Activated CD8-positive, alpha-beta T cell treated with anti-CD3 and anti-CD28 coated beads for 36 hours (primary cell): ENCODE measurements at regions of chr1 and their contacts with region 1.

Region 1: GRCh38 chr1:205977402-205978014 is 25.7 kb downstream of the RAB7B start:
- DNase-seq: peak; percentile 74
- ATAC-seq: peak; percentile 88
- H3K4me3 Mint-ChIP-seq: no peak overlapping the region
- H3K27ac Mint-ChIP-seq: no peak overlapping the region
- H3K4me1 Mint-ChIP-seq: no peaks in the 10 kb centered on the region
- H3K27me3 Mint-ChIP-seq: peaks cover 1% of the 10 kb centered on the region
- CTCF ChIP-seq: peak; percentile 87

Region 2: GRCh38 chr1:205449750-205450443 is 527.6 kb before region 1 on chr1:
- CTCF ChIA-PET with region 1: no interaction called
- POLR2A ChIA-PET with region 1: no interaction called
- intact Hi-C with region 1: no loop called
- DNase-seq: peak; percentile 62
- ATAC-seq: peak; percentile 93
- H3K4me3 Mint-ChIP-seq: peak overlapping the region; percentile 32
- H3K27ac Mint-ChIP-seq: peak overlapping the region; percentile 77
- H3K4me1 Mint-ChIP-seq: peaks cover 5% of the 10 kb centered on the region
- H3K27me3 Mint-ChIP-seq: peaks cover 28% of the 10 kb centered on the region
- CTCF ChIP-seq: no peak

Region 3: DNA sequence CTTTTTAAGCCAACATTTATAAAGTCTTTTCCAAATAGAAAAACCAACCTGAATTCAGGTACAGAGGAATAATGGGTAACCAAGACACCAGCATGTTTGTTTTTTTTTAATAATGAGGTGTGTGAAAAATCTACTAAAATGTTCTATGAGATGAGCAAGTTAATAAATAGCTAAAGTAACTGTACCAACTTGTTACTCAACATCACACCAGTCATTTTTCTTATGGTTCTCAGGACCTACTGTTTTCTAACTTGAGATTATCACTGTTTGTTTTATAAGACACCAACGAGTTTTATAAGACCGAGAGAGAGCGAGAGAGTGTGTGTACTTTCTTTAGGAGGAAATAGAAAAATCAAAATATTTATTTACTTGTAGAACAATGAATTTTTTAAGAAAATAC is 358.1 kb before region 1 on chr1:
- CTCF ChIA-PET with region 1: no interaction called
- POLR2A ChIA-PET with region 1: no interaction called
- intact Hi-C with region 1: no loop called
- DNase-seq: no peak
- ATAC-seq: no peak
- H3K4me3 Mint-ChIP-seq: no peak overlapping the region
- H3K27ac Mint-ChIP-seq: no peak overlapping the region
- H3K4me1 Mint-ChIP-seq: peaks cover 29% of the 10 kb centered on the region
- H3K27me3 Mint-ChIP-seq: no peaks in the 10 kb centered on the region
- CTCF ChIP-seq: no peak

Region 4: DNA sequence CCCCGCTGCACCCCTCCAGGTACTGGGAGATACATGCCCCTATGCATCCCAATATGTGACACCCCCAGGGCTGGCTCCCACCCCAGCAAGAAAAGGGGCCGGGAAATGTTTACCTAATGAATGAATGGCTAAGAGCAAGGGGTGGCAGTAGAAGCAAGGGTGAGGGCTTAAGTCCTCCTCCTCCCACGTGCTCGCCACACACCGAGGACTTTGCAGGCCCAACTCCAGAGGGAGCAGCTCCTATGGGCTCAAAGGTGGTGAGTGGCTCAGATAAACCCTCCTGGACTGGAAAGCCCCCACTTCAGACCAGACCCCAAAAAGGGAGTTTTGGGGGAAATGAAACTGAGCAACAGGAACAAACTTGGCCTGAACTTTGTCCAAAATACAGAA is 308.6 kb before region 1 on chr1:
- CTCF ChIA-PET with region 1: interaction called, 10 read pairs
- POLR2A ChIA-PET with region 1: no interaction called
- intact Hi-C with region 1: no loop called
- DNase-seq: no peak
- ATAC-seq: peak; percentile 31
- H3K4me3 Mint-ChIP-seq: no peak overlapping the region
- H3K27ac Mint-ChIP-seq: no peak overlapping the region
- H3K4me1 Mint-ChIP-seq: peaks cover 7% of the 10 kb centered on the region
- H3K27me3 Mint-ChIP-seq: peaks cover 9% of the 10 kb centered on the region
- CTCF ChIP-seq: no peak

Region 5: GRCh38 chr1:205791568-205792180 is 185.8 kb before region 1 on chr1:
- CTCF ChIA-PET with region 1: interaction called, 145 read pairs
- POLR2A ChIA-PET with region 1: interaction called, 6 read pairs
- intact Hi-C with region 1: loop called (anchors 2 kb)
- DNase-seq: peak; percentile 77
- ATAC-seq: peak; percentile 95
- H3K4me3 Mint-ChIP-seq: no peak overlapping the region
- H3K27ac Mint-ChIP-seq: no peak overlapping the region
- H3K4me1 Mint-ChIP-seq: no peaks in the 10 kb centered on the region
- H3K27me3 Mint-ChIP-seq: no peaks in the 10 kb centered on the region
- CTCF ChIP-seq: peak; percentile 87

Region 6: GRCh38 chr1:205858141-205858961 is 119.2 kb before region 1 on chr1:
- CTCF ChIA-PET with region 1: interaction called, 10 read pairs
- POLR2A ChIA-PET with region 1: no interaction called
- intact Hi-C with region 1: no loop called
- DNase-seq: no peak
- ATAC-seq: no peak
- H3K4me3 Mint-ChIP-seq: no peak overlapping the region
- H3K27ac Mint-ChIP-seq: no peak overlapping the region
- H3K4me1 Mint-ChIP-seq: peaks cover 4% of the 10 kb centered on the region
- H3K27me3 Mint-ChIP-seq: no peaks in the 10 kb centered on the region
- CTCF ChIP-seq: no peak

Region 7: GRCh38 chr1:205870236-205870635 is 107.3 kb before region 1 on chr1:
- CTCF ChIA-PET with region 1: no interaction called
- POLR2A ChIA-PET with region 1: no interaction called
- intact Hi-C with region 1: no loop called
- DNase-seq: no peak
- ATAC-seq: no peak
- H3K4me3 Mint-ChIP-seq: no peak overlapping the region
- H3K27ac Mint-ChIP-seq: no peak overlapping the region
- H3K4me1 Mint-ChIP-seq: no peaks in the 10 kb centered on the region
- H3K27me3 Mint-ChIP-seq: no peaks in the 10 kb centered on the region
- CTCF ChIP-seq: no peak

Region 8: GRCh38 chr1:205950280-205950679 is 27.2 kb before region 1 on chr1:
- CTCF ChIA-PET with region 1: interaction called, 26 read pairs
- POLR2A ChIA-PET with region 1: no interaction called
- intact Hi-C with region 1: no loop called
- DNase-seq: no peak
- ATAC-seq: no peak
- H3K4me3 Mint-ChIP-seq: no peak overlapping the region
- H3K27ac Mint-ChIP-seq: no peak overlapping the region
- H3K4me1 Mint-ChIP-seq: no peaks in the 10 kb centered on the region
- H3K27me3 Mint-ChIP-seq: no peaks in the 10 kb centered on the region
- CTCF ChIP-seq: no peak

Region 9: DNA sequence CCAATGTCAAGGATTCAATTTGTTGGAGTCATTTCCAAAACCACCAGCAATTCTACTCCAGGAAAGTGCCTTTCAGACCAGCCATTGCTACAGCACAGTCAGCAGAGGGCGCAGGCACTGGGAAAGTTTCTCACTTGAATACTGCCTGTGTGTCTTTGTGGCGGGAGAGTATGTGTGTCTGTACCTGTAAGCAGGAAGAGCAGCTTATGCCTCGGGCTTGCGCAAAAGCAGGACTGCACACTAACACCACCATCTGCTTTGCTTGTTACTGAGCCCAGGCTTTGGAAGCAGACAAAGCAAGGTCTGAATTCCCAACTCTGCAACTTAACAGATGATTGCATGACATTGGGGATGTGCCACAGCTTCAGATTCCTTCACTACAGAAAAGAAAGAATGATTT is 53.2 kb after region 1 on chr1:
- CTCF ChIA-PET with region 1: interaction called, 30 read pairs
- POLR2A ChIA-PET with region 1: no interaction called
- intact Hi-C with region 1: no loop called
- DNase-seq: peak; percentile 78
- ATAC-seq: peak; percentile 96
- H3K4me3 Mint-ChIP-seq: no peak overlapping the region
- H3K27ac Mint-ChIP-seq: no peak overlapping the region
- H3K4me1 Mint-ChIP-seq: peaks cover 9% of the 10 kb centered on the region
- H3K27me3 Mint-ChIP-seq: peaks cover 24% of the 10 kb centered on the region
- CTCF ChIP-seq: peak; percentile 89